ENCODE measurements at regions of chr3 and their contacts with region 1.

Region 1: GRCh38 chr3:186551387-186551786 is 7.2 kb upstream of the CRYGS start:
- DNase-seq: no peak
- H3K4me3 ChIP-seq: no peak overlapping the region
- H3K4me3 Mint-ChIP-seq: no peak overlapping the region
- H3K27ac Mint-ChIP-seq: no peak overlapping the region
- H3K4me1 ChIP-seq: no peaks in the 10 kb centered on the region
- H3K4me1 Mint-ChIP-seq: no peaks in the 10 kb centered on the region
- H3K27me3 ChIP-seq: no peaks in the 10 kb centered on the region
- H3K27me3 Mint-ChIP-seq: no peaks in the 10 kb centered on the region
- CTCF ChIP-seq: peak in 1 of 2 experiments; percentile 16

Region 2: DNA sequence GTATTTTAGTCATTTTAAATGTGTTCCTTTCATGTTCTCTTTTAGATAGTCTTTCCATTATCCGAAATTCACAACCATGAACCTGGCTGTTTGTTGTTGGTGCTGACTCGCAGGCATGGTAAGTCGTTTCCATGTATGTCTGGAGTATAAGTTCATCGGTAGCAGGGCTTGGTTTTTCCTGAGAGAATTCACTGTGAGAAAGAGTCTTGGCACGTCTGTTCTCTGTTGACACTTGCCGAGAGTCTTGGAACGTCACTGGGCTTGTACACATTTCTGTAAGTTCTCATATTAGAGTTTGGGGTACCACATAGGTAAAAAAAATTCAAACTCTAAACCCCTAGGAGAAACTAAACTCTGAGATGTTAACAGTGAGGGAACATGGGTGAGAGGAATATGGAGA is 202.6 kb after region 1 on chr3:
- CTCF ChIA-PET with region 1: no interaction called
- POLR2A ChIA-PET with region 1: no interaction called
- intact Hi-C with region 1: loop called (anchors 1 kb)
- DNase-seq: no peak
- H3K4me3 ChIP-seq: no peak overlapping the region
- H3K4me3 Mint-ChIP-seq: no peak overlapping the region
- H3K27ac Mint-ChIP-seq: no peak overlapping the region
- H3K4me1 ChIP-seq: peaks cover 6% of the 10 kb centered on the region; the same call in 1 of the 2 replicates
- H3K4me1 Mint-ChIP-seq: no peaks in the 10 kb centered on the region
- H3K27me3 ChIP-seq: no peaks in the 10 kb centered on the region
- H3K27me3 Mint-ChIP-seq: no peaks in the 10 kb centered on the region
- CTCF ChIP-seq: no peak

Region 3: GRCh38 chr3:186821429-186822367 is 270.3 kb after region 1 on chr3:
- CTCF ChIA-PET with region 1: no interaction called
- POLR2A ChIA-PET with region 1: no interaction called
- intact Hi-C with region 1: loop called (anchors 1 kb)
- DNase-seq: peak in 1 of 2 experiments; percentile 47
- H3K4me3 ChIP-seq: no peak overlapping the region
- H3K4me3 Mint-ChIP-seq: no peak overlapping the region
- H3K27ac Mint-ChIP-seq: no peak overlapping the region
- H3K4me1 ChIP-seq: no peaks in the 10 kb centered on the region
- H3K4me1 Mint-ChIP-seq: peaks cover 5% of the 10 kb centered on the region
- H3K27me3 ChIP-seq: no peaks in the 10 kb centered on the region
- H3K27me3 Mint-ChIP-seq: no peaks in the 10 kb centered on the region
- CTCF ChIP-seq: peak; percentile 58 to 62